Endothelial cell of umbilical vein (primary cell): ENCODE measurements at regions of chr1 and their contacts with region 1.

Region 1: DNA sequence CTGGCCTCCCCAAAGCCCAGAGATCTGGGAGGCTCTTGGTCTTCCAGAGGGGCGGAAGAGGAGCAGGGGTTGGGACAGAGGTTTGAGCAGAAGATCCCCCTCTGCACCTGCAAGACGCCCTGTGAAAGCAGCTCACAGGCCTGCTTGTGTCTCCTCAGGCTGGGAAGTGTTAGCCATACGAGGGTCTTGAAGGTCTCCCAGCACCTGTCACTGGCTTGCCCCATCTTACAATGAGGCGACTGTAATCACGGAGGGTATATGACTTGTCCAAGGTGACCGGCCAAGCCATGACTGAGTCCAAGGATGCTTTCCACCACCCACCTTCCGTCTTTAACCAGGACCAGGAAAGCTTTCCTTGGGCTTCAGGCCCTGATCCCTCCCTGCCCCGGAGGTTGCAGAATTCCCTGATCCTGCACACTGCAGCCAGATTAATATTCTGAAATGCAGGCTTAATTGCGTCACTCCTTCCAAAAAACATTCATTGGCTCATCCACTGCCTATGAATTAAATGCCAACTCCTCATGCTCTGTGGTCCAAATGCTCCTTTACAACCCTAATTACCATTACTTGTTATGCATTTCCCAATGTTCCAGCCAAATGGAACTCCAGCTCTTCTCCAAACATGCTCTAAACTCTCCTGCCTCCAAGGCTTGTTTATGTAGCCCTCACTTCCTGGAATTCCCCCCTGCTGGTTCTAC is 64.0 kb downstream of the DDX20 start:
- DNase-seq: no peak
- H3K4me3 ChIP-seq: no peak overlapping the region
- H3K27ac ChIP-seq: no peak overlapping the region
- H3K4me1 ChIP-seq: no peaks in the 10 kb centered on the region
- H3K27me3 ChIP-seq: peaks cover 2 to 3% of the 10 kb centered on the region in 2 experiments
- CTCF ChIP-seq: no peak
- POLR2A ChIP-seq: no peak

Region 2: GRCh38 chr1:111832521-111833155 is 12.9 kb after region 1 on chr1:
- CTCF ChIA-PET with region 1: no interaction called
- POLR2A ChIA-PET with region 1: no interaction called
- dilution Hi-C with region 1: no loop called
- intact Hi-C with region 1: loop called (anchors 1 kb)
- DNase-seq: no peak
- H3K4me3 ChIP-seq: no peak overlapping the region
- H3K27ac ChIP-seq: no peak overlapping the region
- H3K4me1 ChIP-seq: no peaks in the 10 kb centered on the region
- H3K27me3 ChIP-seq: no peaks in the 10 kb centered on the region
- CTCF ChIP-seq: no peak
- POLR2A ChIP-seq: no peak